IMR-90 (cell line): ENCODE measurements at regions of chr19 and their contacts with region 1.

Region 1: GRCh38 chr19:8505680-8506401 is 3.4 kb upstream of the PRAM1 start:
- DNase-seq: peak; percentile 49
- ATAC-seq: peak; percentile 94
- H3K4me3 ChIP-seq: peak overlapping the region; percentile 35
- H3K27ac ChIP-seq: no peak overlapping the region
- H3K4me1 ChIP-seq: no peaks in the 10 kb centered on the region
- H3K27me3 ChIP-seq: no peaks in the 10 kb centered on the region
- CTCF ChIP-seq: peak; percentile 84
- POLR2A ChIP-seq: no peak
- RAD21 ChIP-seq: peak; percentile 76

Region 2: GRCh38 chr19:8355631-8356402 is 150.0 kb before region 1 on chr19:
- CTCF ChIA-PET with region 1: interaction called, 5 read pairs
- POLR2A ChIA-PET with region 1: no interaction called
- dilution Hi-C with region 1: no loop called
- in situ Hi-C with region 1: loop called (anchors 5 kb)
- intact Hi-C with region 1: loop called (anchors 1 kb)
- DNase-seq: peak; percentile 98
- ATAC-seq: peak; percentile 90
- H3K4me3 ChIP-seq: no peak overlapping the region
- H3K27ac ChIP-seq: no peak overlapping the region; the same call in 1 of the 2 replicates
- H3K4me1 ChIP-seq: no peaks in the 10 kb centered on the region
- H3K27me3 ChIP-seq: no peaks in the 10 kb centered on the region
- CTCF ChIP-seq: no peak
- POLR2A ChIP-seq: no peak
- RAD21 ChIP-seq: peak; percentile 18

Region 3: GRCh38 chr19:8396563-8397203 is 109.2 kb before region 1 on chr19:
- CTCF ChIA-PET with region 1: no interaction called
- POLR2A ChIA-PET with region 1: no interaction called
- dilution Hi-C with region 1: no loop called
- in situ Hi-C with region 1: no loop called
- intact Hi-C with region 1: no loop called
- DNase-seq: peak; percentile 39
- ATAC-seq: peak; percentile 74
- H3K4me3 ChIP-seq: no peak overlapping the region
- H3K27ac ChIP-seq: no peak overlapping the region
- H3K4me1 ChIP-seq: peaks cover 11% of the 10 kb centered on the region
- H3K27me3 ChIP-seq: no peaks in the 10 kb centered on the region
- CTCF ChIP-seq: peak; percentile 67
- POLR2A ChIP-seq: no peak
- RAD21 ChIP-seq: peak; percentile 73

Region 4: DNA sequence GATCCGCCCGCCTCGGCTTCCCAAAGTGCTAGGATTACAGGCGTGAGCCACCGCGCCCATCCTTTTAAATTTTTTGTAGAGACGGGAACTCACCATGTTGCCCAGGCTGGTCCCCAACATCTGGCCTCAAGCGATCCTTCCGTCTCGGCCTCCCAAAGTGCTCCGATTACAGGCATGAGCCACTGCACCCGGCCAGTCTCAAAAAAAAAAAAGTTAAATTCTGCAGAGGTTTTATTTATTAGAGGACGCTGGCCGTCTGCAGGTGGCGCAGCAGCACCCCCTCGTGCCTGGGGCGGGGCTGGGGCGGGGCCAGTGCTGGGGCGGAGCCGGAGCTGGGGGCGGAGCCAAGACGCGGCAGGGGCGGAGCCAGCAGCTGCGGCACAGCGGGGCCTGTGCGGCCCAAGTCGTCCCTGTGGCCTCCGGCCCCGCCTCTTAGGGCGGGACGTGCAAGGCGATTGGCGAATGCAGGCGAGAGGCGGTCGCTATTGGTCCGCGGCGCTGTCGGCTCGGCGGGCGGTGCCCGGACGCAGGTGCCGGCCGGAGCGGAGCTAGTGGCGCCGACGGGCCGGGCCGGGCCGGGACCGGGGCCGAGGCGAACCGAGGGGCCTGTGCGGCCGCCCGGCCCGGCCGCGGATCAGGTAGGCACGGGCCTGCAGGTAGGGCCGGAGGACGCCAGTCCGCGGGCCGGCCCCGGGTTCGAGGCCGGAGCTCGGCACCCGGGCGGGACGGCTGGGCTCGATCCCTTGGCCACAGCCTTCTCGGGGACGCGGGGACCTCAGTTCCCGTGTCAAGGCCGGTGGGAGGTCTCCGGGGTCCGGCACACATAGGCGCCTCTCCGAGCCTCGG is 92.8 kb before region 1 on chr19 and contains the start of gene MARCHF2:
- CTCF ChIA-PET with region 1: interaction called, 4 read pairs
- POLR2A ChIA-PET with region 1: no interaction called
- dilution Hi-C with region 1: no loop called
- in situ Hi-C with region 1: no loop called
- intact Hi-C with region 1: loop called (anchors 5 kb)
- DNase-seq: peak; percentile 97
- ATAC-seq: peak; percentile 100
- H3K4me3 ChIP-seq: peak within 1 kb of the TSS; percentile 67
- H3K27ac ChIP-seq: no peak within 1 kb of the TSS; the same call in 1 of the 2 replicates
- H3K4me1 ChIP-seq: peaks cover 4% of the 10 kb centered on the region
- H3K27me3 ChIP-seq: no peaks in the 10 kb centered on the region
- CTCF ChIP-seq: peak; percentile 74
- POLR2A ChIP-seq: no peak
- RAD21 ChIP-seq: peak; percentile 43
- total RNA-seq, gene MARCHF2: 48.6 and 58.8 TPM in 2 replicates

Region 5: DNA sequence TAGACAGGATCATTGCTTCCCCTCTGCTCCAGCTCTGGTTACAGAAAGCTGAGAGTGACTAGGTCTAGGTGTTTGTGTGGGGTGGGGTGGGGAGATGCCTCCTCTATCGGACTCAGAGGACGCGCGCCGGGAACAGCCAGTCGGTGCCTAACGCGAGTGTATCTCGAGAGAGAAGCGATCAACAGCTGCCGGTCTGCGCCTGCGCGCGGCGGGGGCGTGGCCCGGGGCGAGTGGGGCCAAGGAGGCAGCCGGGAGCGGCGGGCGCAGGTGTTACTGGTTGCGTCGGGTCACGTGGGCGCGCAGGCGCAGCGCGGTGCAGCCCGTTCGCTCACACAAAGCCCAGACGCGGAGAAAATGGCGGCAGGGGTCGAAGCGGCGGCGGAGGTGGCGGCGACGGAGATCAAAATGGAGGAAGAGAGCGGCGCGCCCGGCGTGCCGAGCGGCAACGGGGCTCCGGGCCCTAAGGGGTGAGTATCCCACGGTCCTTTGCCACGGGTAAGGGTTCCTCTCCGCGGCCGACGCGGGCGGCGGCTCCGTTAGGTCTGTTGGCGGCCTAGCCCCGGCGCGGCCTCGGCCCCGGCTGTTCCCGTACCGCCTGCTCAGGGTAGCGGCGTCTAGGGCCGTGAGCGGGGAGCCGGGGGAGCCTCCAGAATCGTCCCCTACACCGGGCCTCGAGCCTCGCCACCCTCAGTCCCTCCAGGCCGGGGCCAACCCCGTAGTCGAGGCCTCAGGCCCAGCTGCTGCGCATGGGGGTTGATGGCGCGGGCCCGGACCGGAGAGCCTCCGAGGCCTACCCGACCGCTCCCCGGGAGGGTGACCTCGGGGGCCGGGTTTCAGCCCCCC is 61.0 kb before region 1 on chr19 and contains the start of gene HNRNPM:
- CTCF ChIA-PET with region 1: interaction called, 5 read pairs
- POLR2A ChIA-PET with region 1: no interaction called
- dilution Hi-C with region 1: no loop called
- in situ Hi-C with region 1: no loop called
- intact Hi-C with region 1: loop called (anchors 2 kb)
- DNase-seq: peak; percentile 95
- ATAC-seq: peak; percentile 95
- H3K4me3 ChIP-seq: peak within 1 kb of the TSS; percentile 83
- H3K27ac ChIP-seq: peak within 1 kb of the TSS; percentile 88
- H3K4me1 ChIP-seq: peaks cover 5% of the 10 kb centered on the region
- H3K27me3 ChIP-seq: no peaks in the 10 kb centered on the region
- CTCF ChIP-seq: no peak
- POLR2A ChIP-seq: peak; percentile 95
- RAD21 ChIP-seq: no peak
- total RNA-seq, gene HNRNPM: 75.6 and 90.5 TPM in 2 replicates

Region 6: DNA sequence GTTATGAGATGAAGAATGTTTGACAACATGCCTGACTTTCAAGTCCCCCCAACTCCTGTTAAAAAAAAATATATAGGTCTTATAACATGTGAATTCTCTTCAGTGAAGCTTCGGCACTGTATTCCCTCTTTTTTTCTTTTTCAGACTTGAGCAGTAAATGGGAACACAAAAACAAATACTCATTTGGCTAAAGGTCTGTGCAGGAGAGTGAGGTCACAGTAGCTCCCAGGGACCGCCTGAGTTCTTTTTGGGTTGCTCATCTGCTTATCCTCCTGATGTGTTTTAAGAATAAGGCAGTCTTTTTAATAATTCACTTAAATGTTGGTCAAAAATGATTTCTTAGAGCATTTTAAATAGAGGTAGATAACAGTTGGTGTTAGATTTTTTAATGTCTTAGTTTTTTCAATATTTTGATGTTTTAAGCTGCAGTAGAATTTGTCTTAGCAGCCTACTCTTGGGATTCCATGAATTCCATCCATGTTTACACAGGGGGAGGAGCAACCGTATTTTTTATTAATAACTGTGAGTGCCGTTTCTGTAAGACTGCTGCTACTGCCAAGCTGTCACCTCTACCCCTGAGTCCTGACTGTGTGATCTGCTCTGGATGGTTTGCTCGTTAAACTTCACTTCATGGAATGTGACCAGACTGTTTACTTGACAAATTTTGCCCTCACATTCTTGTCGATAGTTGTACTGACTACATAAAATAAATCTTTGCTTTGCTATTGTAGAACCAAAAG is 46.2 kb before region 1 on chr19:
- CTCF ChIA-PET with region 1: no interaction called
- POLR2A ChIA-PET with region 1: no interaction called
- dilution Hi-C with region 1: no loop called
- in situ Hi-C with region 1: no loop called
- intact Hi-C with region 1: loop called (anchors 5 kb)
- DNase-seq: peak; percentile 86
- ATAC-seq: peak; percentile 84
- H3K4me3 ChIP-seq: no peak overlapping the region
- H3K27ac ChIP-seq: peak overlapping the region; percentile 87
- H3K4me1 ChIP-seq: peaks cover 33% of the 10 kb centered on the region
- H3K27me3 ChIP-seq: no peaks in the 10 kb centered on the region
- CTCF ChIP-seq: no peak
- POLR2A ChIP-seq: no peak
- RAD21 ChIP-seq: no peak

Region 7: DNA sequence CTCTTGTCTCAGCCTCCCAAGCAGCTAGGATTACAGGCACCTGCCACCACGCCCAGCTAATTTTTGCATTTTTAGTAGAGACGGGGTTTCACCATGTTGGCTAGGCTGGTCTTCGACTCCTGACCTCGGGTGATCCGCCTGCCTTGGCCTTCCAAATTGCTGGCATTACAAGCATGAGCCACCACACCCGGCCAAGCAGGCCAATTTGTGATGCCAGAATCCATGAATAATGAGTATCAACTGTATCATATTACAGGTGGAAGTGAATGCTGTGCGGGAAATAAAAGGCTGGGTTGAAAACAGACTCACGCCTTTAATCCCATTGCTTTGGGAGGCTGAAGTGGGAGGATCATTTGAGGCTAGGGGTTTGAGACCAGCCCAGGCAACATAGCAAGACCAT is 121.0 kb after region 1 on chr19:
- CTCF ChIA-PET with region 1: no interaction called
- POLR2A ChIA-PET with region 1: no interaction called
- dilution Hi-C with region 1: no loop called
- in situ Hi-C with region 1: no loop called
- intact Hi-C with region 1: no loop called
- DNase-seq: no peak
- ATAC-seq: no peak
- H3K4me3 ChIP-seq: no peak overlapping the region
- H3K27ac ChIP-seq: no peak overlapping the region
- H3K4me1 ChIP-seq: peaks cover 2% of the 10 kb centered on the region; the same call in 1 of the 2 replicates
- H3K27me3 ChIP-seq: no peaks in the 10 kb centered on the region
- CTCF ChIP-seq: no peak
- POLR2A ChIP-seq: no peak
- RAD21 ChIP-seq: no peak

Region 8: GRCh38 chr19:8826383-8826782 is 320.5 kb after region 1 on chr19:
- CTCF ChIA-PET with region 1: no interaction called
- POLR2A ChIA-PET with region 1: no interaction called
- dilution Hi-C with region 1: no loop called
- in situ Hi-C with region 1: no loop called
- intact Hi-C with region 1: no loop called
- DNase-seq: no peak
- ATAC-seq: no peak
- H3K4me3 ChIP-seq: no peak overlapping the region
- H3K27ac ChIP-seq: no peak overlapping the region
- H3K4me1 ChIP-seq: peaks cover 4% of the 10 kb centered on the region
- H3K27me3 ChIP-seq: no peaks in the 10 kb centered on the region
- CTCF ChIP-seq: no peak
- POLR2A ChIP-seq: no peak
- RAD21 ChIP-seq: no peak